Ascending aorta (tissue), 2 donors: ENCODE measurements at regions of chr19 and their contacts with region 1.

Region 1: GRCh38 chr19:33868788-33869412 is 72.2 kb downstream of the KCTD15 start:
- DNase-seq: peak in 1 of 2 donors; percentile 66
- H3K4me3 ChIP-seq: peak overlapping the region in 1 of 2 donors; percentile 58
- H3K27ac ChIP-seq: peak overlapping the region in 1 of 2 donors; percentile 44
- H3K4me1 ChIP-seq: peaks cover 0 to 7% of the 10 kb centered on the region in 2 donors
- H3K27me3 ChIP-seq: no peaks in the 10 kb centered on the region
- CTCF ChIP-seq: peak in 1 of 3 experiments; percentile 18

Region 2: DNA sequence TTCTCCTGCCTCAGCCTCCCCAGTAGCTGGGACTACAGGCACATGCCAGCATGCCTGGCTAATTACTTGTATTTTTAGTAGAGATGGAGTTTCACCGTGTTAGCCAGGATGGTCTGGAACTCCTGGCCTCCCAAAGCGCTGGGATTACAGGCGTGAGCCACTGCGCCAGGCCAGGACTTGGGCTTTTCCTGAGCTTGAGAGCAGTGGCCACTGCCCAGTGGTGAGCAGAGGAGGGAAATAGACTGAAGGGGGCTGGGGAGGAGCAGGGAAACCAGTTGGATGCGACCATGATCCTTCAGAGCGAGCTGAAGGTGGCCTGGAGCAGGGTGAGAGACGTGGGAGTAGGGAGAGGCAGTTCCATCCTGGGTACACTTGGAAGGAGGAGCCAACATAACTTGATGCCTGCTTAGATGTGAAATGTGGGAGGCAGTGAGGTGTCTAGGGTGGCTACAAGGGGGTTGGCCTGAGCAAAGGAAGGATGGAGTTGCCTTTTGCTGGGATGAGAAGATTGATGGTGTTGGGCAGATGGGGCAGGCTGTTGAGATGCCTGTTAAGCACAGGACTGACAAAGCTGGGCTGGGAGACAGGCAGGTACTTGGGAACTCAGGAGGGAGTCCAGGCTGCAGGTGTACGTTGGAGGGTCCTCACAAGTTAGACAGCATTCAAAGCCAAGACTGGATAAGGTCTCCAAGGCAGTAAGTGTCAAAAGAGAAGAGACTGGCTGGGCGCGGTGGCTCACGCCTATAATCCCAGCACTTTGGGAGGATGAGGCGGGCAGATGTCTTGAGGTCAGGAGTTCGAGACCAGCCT is 40.4 kb before region 1 on chr19:
- intact Hi-C with region 1: no loop called
- DNase-seq: peak in 1 of 2 donors; percentile 48
- H3K4me3 ChIP-seq: no peak overlapping the region
- H3K27ac ChIP-seq: no peak overlapping the region
- H3K4me1 ChIP-seq: no peaks in the 10 kb centered on the region
- H3K27me3 ChIP-seq: no peaks in the 10 kb centered on the region
- CTCF ChIP-seq: no peak

Region 3: DNA sequence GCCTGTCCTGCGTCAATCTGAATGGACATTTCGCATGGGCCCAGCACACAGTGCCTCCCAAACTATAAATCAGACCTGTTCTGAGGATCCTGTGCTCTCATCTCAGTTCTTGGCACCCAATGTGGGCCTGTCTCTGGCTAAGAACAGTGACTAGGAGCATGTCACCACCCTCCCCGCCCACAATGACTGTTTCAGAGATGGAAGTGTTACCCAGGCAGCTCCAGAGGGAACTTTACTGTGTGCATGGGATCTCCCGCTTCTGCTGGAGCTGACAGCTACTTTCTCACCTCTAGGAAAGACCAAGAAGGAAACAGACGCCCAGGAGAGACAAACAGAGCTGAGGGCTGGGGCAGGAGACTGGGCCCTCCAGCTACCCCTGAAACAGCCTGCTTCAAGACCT is 27.2 kb before region 1 on chr19:
- intact Hi-C with region 1: no loop called
- DNase-seq: no peak
- H3K4me3 ChIP-seq: no peak overlapping the region
- H3K27ac ChIP-seq: no peak overlapping the region
- H3K4me1 ChIP-seq: no peaks in the 10 kb centered on the region
- H3K27me3 ChIP-seq: no peaks in the 10 kb centered on the region
- CTCF ChIP-seq: no peak

Region 4: DNA sequence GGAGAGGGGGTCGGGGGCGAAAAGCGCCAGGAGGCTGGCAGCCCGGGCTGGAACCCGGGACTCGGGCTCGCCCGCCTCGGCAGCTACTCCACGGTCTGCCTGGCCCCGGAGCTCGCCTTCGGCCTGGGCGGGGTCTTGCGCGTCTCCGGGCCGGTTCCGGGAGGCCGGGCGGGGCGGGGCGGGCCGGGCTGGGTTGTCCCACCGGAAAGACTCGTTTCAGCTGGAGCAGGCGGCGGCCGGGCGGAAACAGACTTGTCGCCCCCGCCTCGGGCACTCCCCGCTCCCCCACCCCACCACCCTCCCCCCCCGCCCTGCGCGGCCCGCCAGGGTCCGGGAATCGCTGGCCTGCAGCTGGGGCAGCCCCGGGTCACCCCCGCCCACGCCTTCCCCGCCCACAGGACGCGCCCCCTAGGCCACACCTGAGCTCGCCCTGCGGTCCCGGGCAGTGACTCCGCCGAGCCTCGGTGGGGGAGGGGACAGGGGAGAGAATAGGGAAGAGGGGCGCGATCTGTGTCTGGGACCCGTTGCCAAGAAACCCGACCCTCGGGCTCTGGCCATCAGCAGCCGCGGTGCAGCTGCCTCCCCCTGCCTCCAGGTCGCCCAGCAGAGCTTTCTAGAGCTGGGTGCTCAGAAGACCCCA is 37.2 kb after region 1 on chr19:
- intact Hi-C with region 1: loop called (anchors 2 kb)
- DNase-seq: peak in 1 of 2 donors; percentile 71
- H3K4me3 ChIP-seq: peak overlapping the region; percentile 59 to 60
- H3K27ac ChIP-seq: peak overlapping the region; percentile 29 to 57
- H3K4me1 ChIP-seq: peaks cover 4 to 6% of the 10 kb centered on the region in 2 donors
- H3K27me3 ChIP-seq: no peaks in the 10 kb centered on the region
- CTCF ChIP-seq: no peak

Region 5: DNA sequence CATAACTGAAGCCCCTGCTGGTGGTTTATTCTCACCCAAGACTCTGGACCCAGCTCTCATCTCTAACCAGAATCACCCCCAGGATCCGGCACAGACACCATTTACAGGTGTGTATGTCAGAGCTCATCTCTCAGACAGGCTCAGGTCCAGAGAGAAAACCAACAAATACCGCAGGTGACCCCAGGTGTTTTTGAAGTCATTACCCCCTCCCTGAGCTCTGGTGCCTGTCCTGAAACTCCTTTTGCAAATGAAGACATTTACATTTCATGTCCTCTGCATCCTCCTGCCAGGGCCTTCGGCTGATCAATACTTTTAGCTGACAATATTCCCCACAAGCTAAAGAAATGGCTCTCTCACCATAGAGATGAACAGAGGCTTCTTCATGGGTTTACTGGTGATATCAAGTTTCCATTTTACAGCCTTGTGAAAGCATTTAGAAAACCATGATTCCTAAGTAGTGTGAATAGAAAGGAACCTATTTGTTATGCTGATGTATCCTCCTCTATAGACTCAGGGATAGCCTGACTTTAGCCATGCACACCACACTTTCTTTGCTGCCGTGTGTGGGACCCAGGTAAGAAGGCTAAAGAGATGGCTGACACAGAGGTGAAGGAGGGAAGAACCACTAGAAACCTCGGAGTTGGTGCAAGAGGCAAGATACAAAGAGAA is 59.0 kb after region 1 on chr19:
- intact Hi-C with region 1: no loop called
- DNase-seq: no peak
- H3K4me3 ChIP-seq: no peak overlapping the region
- H3K27ac ChIP-seq: no peak overlapping the region
- H3K4me1 ChIP-seq: no peaks in the 10 kb centered on the region
- H3K27me3 ChIP-seq: no peaks in the 10 kb centered on the region
- CTCF ChIP-seq: no peak

Region 6: GRCh38 chr19:33982706-33983105 is 113.8 kb after region 1 on chr19:
- intact Hi-C with region 1: no loop called
- DNase-seq: no peak
- H3K4me3 ChIP-seq: no peak overlapping the region
- H3K27ac ChIP-seq: no peak overlapping the region
- H3K4me1 ChIP-seq: no peaks in the 10 kb centered on the region
- H3K27me3 ChIP-seq: no peaks in the 10 kb centered on the region
- CTCF ChIP-seq: no peak